ENCODE measurements at regions of chr15 and their contacts with region 1.

Region 1: GRCh38 chr15:41401904-41402267 is 410 bp downstream of the NDUFAF1 start:
- DNase-seq: no peak
- H3K4me3 Mint-ChIP-seq: peak overlapping the region; percentile 90
- H3K27ac Mint-ChIP-seq: peak overlapping the region; percentile 87
- H3K4me1 Mint-ChIP-seq: peaks cover 15% of the 10 kb centered on the region
- H3K27me3 Mint-ChIP-seq: no peaks in the 10 kb centered on the region

Region 2: GRCh38 chr15:41331833-41332787 is 69.8 kb before region 1 on chr15 and contains the start of gene OIP5:
- CTCF ChIA-PET with region 1: interaction called, 4 read pairs
- POLR2A ChIA-PET with region 1: no interaction called
- intact Hi-C with region 1: loop called (anchors 1 kb)
- DNase-seq: peak; percentile 99
- H3K4me3 Mint-ChIP-seq: peak within 1 kb of the TSS; percentile 99
- H3K27ac Mint-ChIP-seq: peak within 1 kb of the TSS; percentile 97
- H3K4me1 Mint-ChIP-seq: peaks cover 23% of the 10 kb centered on the region
- H3K27me3 Mint-ChIP-seq: no peaks in the 10 kb centered on the region
- total RNA-seq, gene OIP5: 11.1 to 13.0 TPM

Region 3: GRCh38 chr15:41416742-41417406 is 15.0 kb after region 1 on chr15 and contains the start of gene RTF1:
- CTCF ChIA-PET with region 1: no interaction called
- POLR2A ChIA-PET with region 1: interaction called, 4 read pairs
- intact Hi-C with region 1: loop called (anchors 1 kb)
- DNase-seq: peak; percentile 98
- H3K4me3 Mint-ChIP-seq: peak within 1 kb of the TSS; percentile 88
- H3K27ac Mint-ChIP-seq: peak within 1 kb of the TSS; percentile 83
- H3K4me1 Mint-ChIP-seq: peaks cover 40% of the 10 kb centered on the region
- H3K27me3 Mint-ChIP-seq: no peaks in the 10 kb centered on the region
- total RNA-seq, gene RTF1: 24.9 to 26.2 TPM

Region 4: DNA sequence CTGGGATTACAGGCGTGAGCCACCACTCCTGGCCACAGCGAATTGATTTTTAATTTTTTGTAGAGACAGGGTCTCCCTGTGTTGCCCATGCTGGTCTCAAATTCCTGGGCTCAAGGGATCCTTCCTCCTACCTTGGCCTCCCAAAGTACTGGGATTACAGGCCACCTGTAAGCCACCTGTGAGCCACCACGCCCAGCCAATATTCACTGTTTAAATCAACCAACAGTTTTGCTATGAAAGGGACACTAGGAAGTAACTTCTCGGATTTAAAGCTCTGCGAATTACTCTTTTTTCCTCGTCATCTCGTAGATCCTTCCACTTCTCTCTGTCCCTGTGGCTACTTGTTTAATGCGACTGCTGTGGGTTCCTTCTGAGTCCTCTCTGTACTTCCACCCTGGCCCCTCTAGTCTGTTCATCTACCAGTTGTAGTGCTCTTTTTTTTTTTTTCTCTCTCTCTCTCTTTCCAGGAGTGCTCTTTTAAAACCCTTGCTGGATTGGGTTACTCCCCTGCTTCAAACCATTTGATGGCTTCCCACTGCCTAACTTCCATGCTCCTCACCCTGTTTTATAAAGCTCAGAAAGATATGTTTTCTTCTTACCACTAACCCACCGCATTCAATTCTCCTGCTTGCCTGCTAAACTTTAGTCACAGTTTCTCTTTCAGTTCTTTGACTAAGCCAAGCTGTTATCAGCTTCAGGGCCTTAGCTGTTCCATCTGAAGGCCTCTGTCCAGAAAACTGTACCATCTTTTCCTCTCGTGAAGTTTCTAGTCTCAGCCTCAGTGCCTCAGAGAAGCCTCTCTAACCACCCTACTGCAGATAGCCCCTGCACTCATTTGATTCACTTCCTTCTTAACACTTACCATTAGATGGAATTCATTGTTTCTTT is 27.4 kb after region 1 on chr15:
- CTCF ChIA-PET with region 1: no interaction called
- POLR2A ChIA-PET with region 1: no interaction called
- intact Hi-C with region 1: loop called (anchors 1 kb)
- DNase-seq: peak; percentile 30
- H3K4me3 Mint-ChIP-seq: peak overlapping the region; percentile 1
- H3K27ac Mint-ChIP-seq: peak overlapping the region; percentile 72
- H3K4me1 Mint-ChIP-seq: peaks cover 23% of the 10 kb centered on the region
- H3K27me3 Mint-ChIP-seq: no peaks in the 10 kb centered on the region

Region 5: GRCh38 chr15:41666353-41666920 is 264.6 kb after region 1 on chr15:
- CTCF ChIA-PET with region 1: no interaction called
- POLR2A ChIA-PET with region 1: no interaction called
- intact Hi-C with region 1: no loop called
- DNase-seq: no peak
- H3K4me3 Mint-ChIP-seq: no peak overlapping the region
- H3K27ac Mint-ChIP-seq: peak overlapping the region; percentile 8
- H3K4me1 Mint-ChIP-seq: peaks cover 48% of the 10 kb centered on the region
- H3K27me3 Mint-ChIP-seq: no peaks in the 10 kb centered on the region